Activated naive CD4-positive, alpha-beta T cell treated with anti-CD3 and anti-CD28 coated beads for 36 hours (primary cell): ENCODE measurements at regions of chr10 and their contacts with region 1.

Region 1: DNA sequence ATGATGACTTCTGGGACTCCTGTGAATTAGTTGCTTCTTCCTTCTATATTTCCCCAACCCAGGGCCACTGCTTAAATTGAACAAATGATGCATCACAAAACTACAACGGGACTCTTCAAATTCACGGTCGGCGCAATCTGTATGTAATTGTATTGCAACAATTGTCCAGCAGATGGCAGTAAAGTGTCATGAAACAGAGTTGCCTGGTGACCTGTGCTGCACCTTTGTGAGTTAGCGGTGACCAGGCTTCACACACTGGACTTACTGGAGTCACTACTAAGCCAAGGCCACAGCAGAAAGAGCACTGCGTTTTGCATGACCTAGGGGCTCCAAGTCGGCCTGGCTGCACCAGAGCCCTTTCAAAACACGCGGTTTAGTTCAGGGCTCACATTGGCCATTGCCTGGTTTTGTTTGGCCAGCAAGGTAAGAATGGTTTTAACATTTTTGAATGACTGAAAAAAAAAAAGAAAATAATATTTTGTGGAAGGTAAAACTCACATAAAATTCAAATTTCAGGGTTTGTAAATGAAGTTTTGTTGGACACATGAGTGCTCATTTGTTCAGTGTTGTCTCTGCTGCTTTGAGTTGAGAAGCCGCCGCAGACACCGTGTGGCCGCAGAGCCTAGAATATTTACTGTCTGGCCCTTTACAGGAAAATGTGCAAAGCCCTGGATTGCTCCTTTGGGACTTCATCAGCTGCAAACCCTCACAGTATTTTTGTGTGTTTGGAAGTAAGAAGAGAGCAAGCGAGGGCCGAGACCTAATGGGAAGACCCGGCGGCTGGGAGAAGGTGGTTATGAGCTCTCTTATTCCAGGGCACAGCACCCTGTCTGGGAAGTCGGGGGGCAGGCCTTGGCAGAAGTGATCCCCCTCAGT is 23.2 kb upstream of the ZNF32 start:
- DNase-seq: peak; percentile 62
- H3K4me3 Mint-ChIP-seq: no peak overlapping the region
- H3K27ac Mint-ChIP-seq: no peak overlapping the region
- H3K4me1 Mint-ChIP-seq: peaks cover 3% of the 10 kb centered on the region
- H3K27me3 Mint-ChIP-seq: peaks cover 32% of the 10 kb centered on the region

Region 2: GRCh38 chr10:43683451-43684291 is 11.8 kb after region 1 on chr10:
- CTCF ChIA-PET with region 1: interaction called, 24 read pairs
- intact Hi-C with region 1: no loop called
- DNase-seq: peak; percentile 43
- H3K4me3 Mint-ChIP-seq: no peak overlapping the region
- H3K27ac Mint-ChIP-seq: no peak overlapping the region
- H3K4me1 Mint-ChIP-seq: no peaks in the 10 kb centered on the region
- H3K27me3 Mint-ChIP-seq: peaks cover 20% of the 10 kb centered on the region

Region 3: DNA sequence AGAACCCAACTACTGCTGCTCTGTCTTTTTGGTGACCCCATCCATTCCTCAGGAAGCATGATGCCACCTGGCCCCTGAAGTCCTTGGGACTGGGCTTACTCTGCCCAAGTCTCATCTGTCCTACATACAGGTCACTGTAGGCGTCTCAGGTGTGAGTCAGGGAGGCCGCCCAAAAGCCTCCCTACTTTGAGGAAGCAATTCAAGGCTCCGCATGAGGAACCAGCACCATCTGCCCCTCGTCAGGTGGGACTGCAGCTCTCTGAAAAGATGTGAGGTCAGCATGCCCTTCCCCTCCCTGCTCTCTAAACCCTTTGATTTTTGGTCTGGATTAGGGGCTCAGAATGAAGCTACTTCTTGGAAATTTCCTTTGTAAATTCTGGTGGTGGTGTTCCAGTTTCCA is 358.2 kb after region 1 on chr10:
- CTCF ChIA-PET with region 1: interaction called, 4 read pairs
- intact Hi-C with region 1: loop called (anchors 5 kb)
- DNase-seq: peak; percentile 51
- H3K4me3 Mint-ChIP-seq: no peak overlapping the region
- H3K27ac Mint-ChIP-seq: no peak overlapping the region
- H3K4me1 Mint-ChIP-seq: no peaks in the 10 kb centered on the region
- H3K27me3 Mint-ChIP-seq: no peaks in the 10 kb centered on the region

Region 4: DNA sequence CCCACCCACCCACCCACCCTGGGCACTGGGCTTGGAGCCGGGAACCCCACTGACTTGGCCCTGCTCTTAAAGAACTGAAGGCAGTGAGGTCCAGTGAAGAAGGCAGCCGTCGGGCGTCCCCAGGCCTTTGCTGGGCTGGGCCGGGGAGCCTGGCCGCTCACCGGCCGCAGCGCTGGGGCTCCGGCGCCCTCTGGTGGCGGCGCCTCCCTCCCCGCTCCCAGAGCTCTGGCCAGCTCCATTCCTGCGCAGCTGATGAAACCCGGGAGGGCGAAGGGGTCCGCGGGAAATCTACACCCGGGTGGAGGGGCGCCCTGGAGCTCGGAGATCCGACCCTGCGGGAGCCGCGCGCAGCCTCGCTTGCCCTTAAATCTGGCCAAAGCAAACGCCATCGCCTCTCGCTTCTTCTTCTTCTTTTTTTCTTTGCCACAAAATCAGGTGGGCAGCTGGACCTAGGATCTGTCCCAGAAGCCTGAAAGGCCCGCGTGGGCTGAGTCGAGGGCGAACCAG is 714.7 kb after region 1 on chr10:
- CTCF ChIA-PET with region 1: interaction called, 11 read pairs
- intact Hi-C with region 1: loop called (anchors 1 kb)
- DNase-seq: peak; percentile 22
- H3K4me3 Mint-ChIP-seq: no peak overlapping the region
- H3K27ac Mint-ChIP-seq: no peak overlapping the region
- H3K4me1 Mint-ChIP-seq: peaks cover 4% of the 10 kb centered on the region
- H3K27me3 Mint-ChIP-seq: peaks cover 28% of the 10 kb centered on the region

Region 5: GRCh38 chr10:44864637-44865288 is 1192.9 kb after region 1 on chr10:
- CTCF ChIA-PET with region 1: interaction called, 3 read pairs
- intact Hi-C with region 1: loop called (anchors 2 kb)
- DNase-seq: peak; percentile 88
- H3K4me3 Mint-ChIP-seq: peak overlapping the region; percentile 81
- H3K27ac Mint-ChIP-seq: no peak overlapping the region
- H3K4me1 Mint-ChIP-seq: peaks cover 5% of the 10 kb centered on the region
- H3K27me3 Mint-ChIP-seq: peaks cover 36% of the 10 kb centered on the region